MCF 10A (cell line): ENCODE measurements at regions of chr1 and their contacts with region 1.

Region 1: DNA sequence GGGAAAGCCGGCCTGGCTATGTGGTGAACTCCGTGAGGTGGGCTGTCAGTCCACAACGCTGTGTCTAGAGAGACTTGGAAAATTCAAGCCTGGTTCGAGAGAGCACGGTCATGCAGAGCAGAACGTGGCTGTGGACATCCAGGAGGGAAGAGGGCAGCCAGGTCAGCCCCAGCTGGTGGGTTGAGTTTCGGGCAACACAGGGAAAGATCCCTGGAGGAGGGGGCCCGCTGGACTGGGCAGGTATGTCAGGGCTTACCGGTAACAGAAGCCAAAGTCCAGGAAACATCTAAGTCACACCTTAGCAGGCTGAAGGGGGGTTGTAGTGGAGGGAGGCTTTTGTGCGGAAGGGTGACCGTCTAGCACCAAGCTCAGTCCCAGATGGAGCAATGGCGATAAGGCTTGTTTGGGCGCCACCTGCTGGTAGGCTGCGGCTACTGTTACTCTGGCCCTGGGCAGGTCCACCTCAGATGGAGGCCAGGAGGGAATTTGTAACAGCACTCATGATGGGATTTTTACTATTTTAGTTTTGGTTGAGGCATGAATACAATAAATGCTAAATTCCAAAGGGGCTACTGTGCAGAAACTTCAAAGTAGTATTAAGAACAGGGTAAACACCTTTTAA is 143.3 kb upstream of the ZNF644 start:
- DNase-seq: peak; percentile 76
- H3K4me3 Mint-ChIP-seq: no peak overlapping the region
- H3K27ac Mint-ChIP-seq: peak overlapping the region; percentile 43
- H3K4me1 Mint-ChIP-seq: no peaks in the 10 kb centered on the region
- H3K27me3 Mint-ChIP-seq: no peaks in the 10 kb centered on the region
- CTCF ChIP-seq: peak; percentile 82

Region 2: GRCh38 chr1:90579212-90579802 is 585.8 kb before region 1 on chr1:
- CTCF ChIA-PET with region 1: interaction called, 21 read pairs
- POLR2A ChIA-PET with region 1: no interaction called
- intact Hi-C with region 1: no loop called
- DNase-seq: peak; percentile 48
- H3K4me3 Mint-ChIP-seq: no peak overlapping the region
- H3K27ac Mint-ChIP-seq: no peak overlapping the region
- H3K4me1 Mint-ChIP-seq: peaks cover 8% of the 10 kb centered on the region
- H3K27me3 Mint-ChIP-seq: no peaks in the 10 kb centered on the region
- CTCF ChIP-seq: peak; percentile 41

Region 3: GRCh38 chr1:91007827-91008226 is 157.3 kb before region 1 on chr1:
- CTCF ChIA-PET with region 1: interaction called, 11 read pairs
- POLR2A ChIA-PET with region 1: no interaction called
- intact Hi-C with region 1: no loop called
- DNase-seq: no peak
- H3K4me3 Mint-ChIP-seq: no peak overlapping the region
- H3K27ac Mint-ChIP-seq: no peak overlapping the region
- H3K4me1 Mint-ChIP-seq: peaks cover 46% of the 10 kb centered on the region
- H3K27me3 Mint-ChIP-seq: no peaks in the 10 kb centered on the region
- CTCF ChIP-seq: no peak

Region 4: DNA sequence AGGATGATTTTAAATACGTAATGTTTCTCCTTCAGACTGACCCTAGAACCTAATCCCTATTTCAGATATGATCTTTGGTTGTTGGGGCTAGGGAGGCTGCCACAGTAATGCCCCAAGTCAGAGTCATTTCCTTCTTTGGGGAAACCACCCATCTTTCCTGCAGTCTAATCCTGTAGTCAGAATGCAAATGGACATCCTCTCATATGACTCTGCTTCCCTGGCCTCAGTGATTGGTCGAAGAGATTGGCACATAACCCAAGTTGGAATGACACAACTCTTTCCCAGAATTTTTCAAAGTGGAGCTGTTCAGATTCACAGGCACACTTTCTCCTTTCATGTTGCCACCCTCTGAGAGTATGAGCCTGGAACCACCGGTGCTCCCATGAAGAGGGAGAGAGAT is 84.5 kb before region 1 on chr1:
- CTCF ChIA-PET with region 1: no interaction called
- POLR2A ChIA-PET with region 1: no interaction called
- intact Hi-C with region 1: no loop called
- DNase-seq: peak; percentile 15
- H3K4me3 Mint-ChIP-seq: no peak overlapping the region
- H3K27ac Mint-ChIP-seq: no peak overlapping the region
- H3K4me1 Mint-ChIP-seq: no peaks in the 10 kb centered on the region
- H3K27me3 Mint-ChIP-seq: no peaks in the 10 kb centered on the region
- CTCF ChIP-seq: no peak

Region 5: GRCh38 chr1:91141858-91142257 is 23.3 kb before region 1 on chr1:
- CTCF ChIA-PET with region 1: interaction called, 15 read pairs
- POLR2A ChIA-PET with region 1: no interaction called
- intact Hi-C with region 1: no loop called
- DNase-seq: no peak
- H3K4me3 Mint-ChIP-seq: no peak overlapping the region
- H3K27ac Mint-ChIP-seq: no peak overlapping the region
- H3K4me1 Mint-ChIP-seq: no peaks in the 10 kb centered on the region
- H3K27me3 Mint-ChIP-seq: peaks cover 9% of the 10 kb centered on the region
- CTCF ChIP-seq: no peak

Region 6: GRCh38 chr1:91201176-91201575 is 36.0 kb after region 1 on chr1:
- CTCF ChIA-PET with region 1: interaction called, 11 read pairs
- POLR2A ChIA-PET with region 1: no interaction called
- intact Hi-C with region 1: no loop called
- DNase-seq: no peak
- H3K4me3 Mint-ChIP-seq: no peak overlapping the region
- H3K27ac Mint-ChIP-seq: no peak overlapping the region
- H3K4me1 Mint-ChIP-seq: no peaks in the 10 kb centered on the region
- H3K27me3 Mint-ChIP-seq: peaks cover 15% of the 10 kb centered on the region
- CTCF ChIP-seq: no peak

Region 7: GRCh38 chr1:91282695-91283420 is 117.7 kb after region 1 on chr1:
- CTCF ChIA-PET with region 1: interaction called, 181 read pairs
- POLR2A ChIA-PET with region 1: interaction called, 5 read pairs
- intact Hi-C with region 1: loop called (anchors 1 kb)
- DNase-seq: peak; percentile 75
- H3K4me3 Mint-ChIP-seq: no peak overlapping the region
- H3K27ac Mint-ChIP-seq: no peak overlapping the region
- H3K4me1 Mint-ChIP-seq: no peaks in the 10 kb centered on the region
- H3K27me3 Mint-ChIP-seq: peaks cover 31% of the 10 kb centered on the region
- CTCF ChIP-seq: peak; percentile 69